K562 (cell line): ENCODE measurements at regions of chr18 and their contacts with region 1.

Region 1: GRCh38 chr18:46281185-46282176 is 177.3 kb downstream of the HAUS1 start:
- DNase-seq: peak; percentile 48 to 68 (median 62)
- ATAC-seq: peak; percentile 90
- H3K4me3 ChIP-seq: no peak overlapping the region
- H3K27ac ChIP-seq: no peak overlapping the region
- H3K4me1 ChIP-seq: peaks cover 0 to 9% of the 10 kb centered on the region in 2 experiments; a peak in 1 of 5 replicates
- H3K27me3 ChIP-seq: peaks cover 5 to 10% of the 10 kb centered on the region in 2 experiments; a peak in 3 of 5 replicates
- CTCF ChIP-seq: peak; percentile 71 to 78 (median 73)
- EP300 ChIP-seq: no peak
- POLR2A ChIP-seq: no peak
- RAD21 ChIP-seq: peak; percentile 62 to 77; a peak in 3 of 4 replicates

Region 2: DNA sequence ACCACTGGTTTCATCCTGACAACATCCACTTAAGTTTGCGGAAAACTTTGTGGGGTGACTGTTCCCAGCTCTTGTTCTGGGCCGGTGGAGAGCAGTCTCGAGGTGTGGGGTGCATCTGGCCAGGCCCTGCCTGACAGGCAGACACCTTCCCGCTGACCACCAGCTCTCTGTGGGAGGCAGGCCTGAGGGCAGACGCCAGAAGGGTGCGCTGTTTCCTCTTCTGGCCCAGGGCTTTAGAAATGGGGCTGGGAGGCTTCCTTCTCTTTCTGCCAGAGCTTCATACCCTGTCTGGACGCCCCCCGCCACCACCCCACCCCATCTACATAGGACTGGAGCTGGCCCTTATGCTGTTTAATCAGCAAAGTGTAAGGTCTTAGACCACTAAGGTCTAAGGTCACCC is 111.7 kb after region 1 on chr18:
- CTCF ChIA-PET with region 1: no interaction called
- POLR2A ChIA-PET with region 1: no interaction called
- in situ Hi-C with region 1: no loop called
- intact Hi-C with region 1: loop called (anchors 5 kb)
- DNase-seq: peak; percentile 37 to 48 (median 40)
- ATAC-seq: peak; percentile 93
- H3K4me3 ChIP-seq: no peak overlapping the region
- H3K27ac ChIP-seq: no peak overlapping the region
- H3K4me1 ChIP-seq: no peaks in the 10 kb centered on the region; a peak in 4 of 5 replicates
- H3K27me3 ChIP-seq: peaks cover 0 to 16% of the 10 kb centered on the region in 2 experiments; a peak in 2 of 5 replicates
- CTCF ChIP-seq: peak; percentile 62 to 73 (median 69)
- EP300 ChIP-seq: no peak
- POLR2A ChIP-seq: no peak
- RAD21 ChIP-seq: peak; percentile 61 to 78

Region 3: GRCh38 chr18:46481048-46481846 is 199.8 kb after region 1 on chr18:
- CTCF ChIA-PET with region 1: interaction called, 9 read pairs
- POLR2A ChIA-PET with region 1: no interaction called
- in situ Hi-C with region 1: loop called (anchors 25 kb)
- intact Hi-C with region 1: loop called (anchors 1 kb)
- DNase-seq: peak; percentile 30 to 56 (median 38)
- ATAC-seq: peak; percentile 85
- H3K4me3 ChIP-seq: no peak overlapping the region
- H3K27ac ChIP-seq: no peak overlapping the region
- H3K4me1 ChIP-seq: no peaks in the 10 kb centered on the region
- H3K27me3 ChIP-seq: peaks cover 0 to 7% of the 10 kb centered on the region in 2 experiments; a peak in 2 of 5 replicates
- CTCF ChIP-seq: peak; percentile 66 to 68 (median 67)
- EP300 ChIP-seq: no peak
- POLR2A ChIP-seq: no peak
- RAD21 ChIP-seq: peak; percentile 40 to 75

Region 4: GRCh38 chr18:46660955-46661749 is 379.7 kb after region 1 on chr18:
- CTCF ChIA-PET with region 1: interaction called, 3 read pairs
- POLR2A ChIA-PET with region 1: no interaction called
- in situ Hi-C with region 1: loop called (anchors 10 kb)
- intact Hi-C with region 1: loop called (anchors 2 kb)
- DNase-seq: no peak
- ATAC-seq: no peak
- H3K4me3 ChIP-seq: no peak overlapping the region
- H3K27ac ChIP-seq: no peak overlapping the region
- H3K4me1 ChIP-seq: peaks cover 0 to 4% of the 10 kb centered on the region in 2 experiments; a peak in 2 of 5 replicates
- H3K27me3 ChIP-seq: peaks cover 0 to 10% of the 10 kb centered on the region in 2 experiments; a peak in 2 of 5 replicates
- CTCF ChIP-seq: no peak
- EP300 ChIP-seq: no peak
- POLR2A ChIP-seq: no peak
- RAD21 ChIP-seq: no peak